ENCODE measurements at regions of chr4 and their contacts with region 1.

Region 1: GRCh38 chr4:13627606-13628301 is at the start of gene BOD1L1:
- DNase-seq: peak; percentile 60
- ATAC-seq: peak; percentile 88
- H3K4me3 ChIP-seq: peak within 1 kb of the TSS; percentile 92
- H3K27ac ChIP-seq: peak within 1 kb of the TSS; percentile 90
- H3K4me1 ChIP-seq: no peaks in the 10 kb centered on the region
- H3K27me3 ChIP-seq: no peaks in the 10 kb centered on the region
- CTCF ChIP-seq: peak; percentile 57 to 62 (median 58)
- EP300 ChIP-seq: peak in 1 of 2 experiments; percentile 49; a peak in 2 of 4 replicates
- POLR2A ChIP-seq: peak; percentile 95
- RAD21 ChIP-seq: 0 out of 2 replicates have a peak, but pooled peaks have one; percentile 29
- polyA plus RNA-seq, gene BOD1L1: 6.8 to 12.1 TPM

Region 2: GRCh38 chr4:13484122-13484748 is 143.5 kb before region 1 on chr4 and contains the start of gene RAB28:
- CTCF ChIA-PET with region 1: no interaction called
- POLR2A ChIA-PET with region 1: no interaction called
- RAD21 ChIA-PET with region 1: no interaction called
- SMC1A ChIA-PET with region 1: no interaction called
- in situ Hi-C with region 1: no loop called
- intact Hi-C with region 1: loop called (anchors 10 kb)
- DNase-seq: peak; percentile 75
- ATAC-seq: peak; percentile 94
- H3K4me3 ChIP-seq: peak within 1 kb of the TSS; percentile 77
- H3K27ac ChIP-seq: peak within 1 kb of the TSS; percentile 100
- H3K4me1 ChIP-seq: no peaks in the 10 kb centered on the region
- H3K27me3 ChIP-seq: no peaks in the 10 kb centered on the region
- CTCF ChIP-seq: no peak
- EP300 ChIP-seq: no peak
- POLR2A ChIP-seq: peak; percentile 84
- RAD21 ChIP-seq: no peak
- polyA plus RNA-seq, gene RAB28: 5.8 to 10.6 TPM

Region 3: DNA sequence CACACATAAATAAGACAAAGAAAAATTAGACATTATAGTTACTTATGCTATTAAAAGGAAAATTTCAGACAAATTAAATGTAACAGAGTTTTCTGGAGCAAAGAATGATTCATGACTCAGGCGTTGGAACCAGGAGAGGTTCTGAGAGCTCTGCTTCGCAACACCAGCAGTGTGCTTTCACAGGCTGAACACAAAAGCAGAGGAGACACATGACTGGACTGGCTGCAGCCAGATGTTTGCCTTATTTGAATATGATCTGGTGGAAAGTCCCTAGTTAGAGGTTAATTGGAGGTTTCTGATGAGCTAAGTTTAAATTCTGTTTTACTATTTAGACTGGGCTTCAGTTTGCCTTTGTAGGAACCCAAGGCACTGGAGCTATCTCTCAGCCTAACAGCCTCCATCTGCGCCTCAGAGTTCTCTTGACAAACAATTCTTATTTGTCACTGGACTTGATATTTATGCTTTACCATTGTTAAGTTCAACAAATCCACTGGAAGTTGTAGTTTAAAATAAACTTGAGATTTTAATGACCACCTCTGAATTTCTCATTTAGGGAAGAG is 16.4 kb before region 1 on chr4:
- CTCF ChIA-PET with region 1: interaction called, 8 read pairs
- POLR2A ChIA-PET with region 1: interaction called, 4 read pairs
- RAD21 ChIA-PET with region 1: interaction called, 9 read pairs
- SMC1A ChIA-PET with region 1: interaction called, 18 read pairs
- in situ Hi-C with region 1: no loop called
- intact Hi-C with region 1: no loop called
- DNase-seq: peak; percentile 52
- ATAC-seq: peak; percentile 97
- H3K4me3 ChIP-seq: peak overlapping the region; percentile 12; the same call in 1 of the 2 replicates
- H3K27ac ChIP-seq: peak overlapping the region; percentile 82
- H3K4me1 ChIP-seq: peaks cover 36% of the 10 kb centered on the region
- H3K27me3 ChIP-seq: no peaks in the 10 kb centered on the region
- CTCF ChIP-seq: no peak
- EP300 ChIP-seq: peak; percentile 9 to 64; a peak in 1 of 4 replicates
- POLR2A ChIP-seq: peak; percentile 66
- RAD21 ChIP-seq: no peak

Region 4: DNA sequence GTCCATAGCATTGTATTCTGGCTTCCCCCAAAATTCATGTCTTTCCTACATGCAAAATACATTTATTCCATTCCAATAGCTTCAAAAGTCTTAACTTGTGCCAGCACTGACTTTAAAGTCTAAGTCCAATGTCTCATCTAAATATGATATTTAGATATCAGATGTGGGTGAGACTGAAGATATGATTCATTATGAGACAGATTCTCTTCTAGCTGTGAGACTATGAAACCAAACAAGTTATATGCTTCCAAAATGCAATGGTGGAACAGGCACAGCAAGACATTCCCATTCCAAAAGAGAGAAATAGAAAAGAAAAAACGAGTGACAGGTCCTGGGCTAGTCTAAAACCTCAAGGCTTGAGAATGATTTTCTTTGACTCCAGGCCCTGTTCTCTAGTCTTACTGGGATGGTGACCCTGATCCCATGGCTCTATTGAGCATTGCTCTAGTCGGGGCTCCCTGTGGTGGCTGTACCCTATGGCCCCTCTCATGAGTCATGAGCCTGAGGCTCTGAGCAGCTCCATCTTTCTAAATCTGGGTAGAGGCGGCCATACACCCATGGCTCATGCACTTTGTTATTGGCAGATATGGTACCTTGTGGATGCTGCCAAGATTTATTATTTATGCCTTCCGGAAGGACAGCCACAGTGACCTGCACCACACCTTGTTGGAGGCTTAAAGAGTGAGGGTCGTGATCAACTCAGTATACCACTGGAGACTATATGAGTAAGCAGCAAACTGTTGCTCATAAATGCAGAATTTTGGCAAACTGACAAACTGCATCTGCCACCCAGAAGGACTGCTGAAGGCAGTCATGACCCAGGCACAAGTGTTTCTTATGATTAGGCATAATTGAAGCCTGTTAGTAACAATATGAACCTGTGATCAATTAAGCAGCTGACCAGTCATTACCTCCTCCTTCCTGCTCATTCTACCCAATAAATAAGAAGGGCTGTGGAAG is 38.2 kb after region 1 on chr4:
- CTCF ChIA-PET with region 1: no interaction called
- POLR2A ChIA-PET with region 1: no interaction called
- RAD21 ChIA-PET with region 1: no interaction called
- SMC1A ChIA-PET with region 1: no interaction called
- in situ Hi-C with region 1: no loop called
- intact Hi-C with region 1: no loop called
- DNase-seq: no peak
- ATAC-seq: no peak
- H3K4me3 ChIP-seq: no peak overlapping the region
- H3K27ac ChIP-seq: no peak overlapping the region
- H3K4me1 ChIP-seq: no peaks in the 10 kb centered on the region
- H3K27me3 ChIP-seq: no peaks in the 10 kb centered on the region
- CTCF ChIP-seq: no peak
- EP300 ChIP-seq: no peak
- POLR2A ChIP-seq: no peak
- RAD21 ChIP-seq: no peak